Left cardiac atrium (tissue), 4 donors: ENCODE measurements at regions of chr1 and their contacts with region 1.

Region 1: GRCh38 chr1:209989525-209989924 is 51.5 kb downstream of the SYT14 start:
- DNase-seq: no peak
- ATAC-seq: no peak

Region 2: GRCh38 chr1:209860293-209860881 is 129.1 kb before region 1 on chr1:
- intact Hi-C with region 1: loop called (anchors 1 to 5 kb)
- DNase-seq: peak; percentile 80
- ATAC-seq: peak in 1 of 2 donors; percentile 85

Region 3: GRCh38 chr1:210170220-210170619 is 180.7 kb after region 1 on chr1:
- intact Hi-C with region 1: no loop called
- DNase-seq: no peak
- ATAC-seq: no peak